Right lobe of liver (tissue), 6 donors: ENCODE measurements at regions of chr3 and their contacts with region 1.

Region 1: DNA sequence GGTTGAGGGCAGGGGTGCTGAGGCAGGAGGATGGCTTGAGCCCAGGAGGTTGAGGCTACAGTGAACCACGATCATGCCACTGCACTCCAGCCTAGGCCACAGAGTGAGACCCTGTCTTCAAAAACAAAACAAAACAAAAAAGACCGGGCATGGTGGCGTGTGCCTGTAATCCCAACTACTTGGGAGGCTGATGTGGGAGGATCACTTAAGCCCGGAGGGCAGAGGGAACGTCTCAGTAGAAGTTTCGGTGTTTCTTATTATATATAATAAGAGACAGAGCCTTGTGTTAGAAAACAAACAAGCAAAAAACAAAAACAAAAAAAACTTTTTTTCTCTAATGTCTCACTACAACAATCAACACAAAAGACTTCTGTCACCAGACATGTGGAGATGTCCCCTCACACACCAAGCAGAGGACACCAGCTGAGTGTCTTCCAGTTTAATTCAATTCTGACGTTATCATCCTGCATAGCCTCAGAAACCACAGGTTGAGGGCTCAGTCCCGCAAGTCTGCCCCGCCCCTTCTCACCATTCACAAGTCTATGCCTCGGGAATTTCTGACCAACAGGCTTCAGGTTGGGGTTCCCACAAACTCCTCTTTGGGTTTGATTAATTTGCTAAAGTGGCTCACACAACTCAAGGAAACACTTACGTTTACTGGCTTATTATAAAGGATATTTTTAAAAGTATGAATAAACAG is 24.0 kb upstream of the EIF4A2 start:
- DNase-seq: no peak
- ATAC-seq: no peak
- H3K4me3 ChIP-seq: no peak overlapping the region
- H3K27ac ChIP-seq: no peak overlapping the region
- H3K4me1 ChIP-seq: no peaks in the 10 kb centered on the region
- H3K27me3 ChIP-seq: no peaks in the 10 kb centered on the region
- CTCF ChIP-seq: no peak
- POLR2A ChIP-seq: no peak

Region 2: DNA sequence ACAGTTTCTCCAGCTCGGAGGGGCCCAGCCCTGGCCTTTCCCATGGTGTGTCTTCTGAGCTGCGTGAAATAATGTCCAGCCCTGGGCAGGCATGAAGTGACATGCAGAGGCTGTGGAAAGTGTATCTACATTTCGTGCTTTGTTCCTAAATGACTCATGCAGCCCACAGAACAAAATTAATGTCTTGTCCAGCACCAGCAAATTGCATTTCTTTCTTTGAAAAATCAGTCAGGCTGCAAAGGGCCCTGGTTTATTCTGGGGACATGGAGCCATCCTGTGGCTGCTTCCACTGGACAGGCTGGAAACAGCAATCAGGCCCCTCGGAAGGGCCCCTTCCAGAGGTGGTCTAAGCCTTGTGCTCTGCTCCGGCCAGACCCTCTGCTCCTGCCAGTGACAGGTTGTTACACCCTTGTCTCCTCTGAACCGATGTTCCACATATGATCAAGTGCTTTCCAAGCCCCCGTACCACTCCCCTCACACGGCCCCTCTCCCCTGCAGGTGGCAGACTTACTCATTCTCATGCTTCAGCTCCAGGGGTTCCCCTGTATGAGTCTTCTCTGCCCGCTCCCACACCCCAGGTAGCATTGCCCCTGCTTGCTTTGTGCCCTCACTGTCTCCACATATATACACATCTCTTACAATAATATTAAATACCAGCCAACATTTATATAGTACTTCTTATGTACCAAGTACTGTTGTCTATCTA is 248.9 kb before region 1 on chr3:
- intact Hi-C with region 1: no loop called
- DNase-seq: no peak
- ATAC-seq: no peak
- H3K4me3 ChIP-seq: no peak overlapping the region
- H3K27ac ChIP-seq: no peak overlapping the region
- H3K4me1 ChIP-seq: no peaks in the 10 kb centered on the region
- H3K27me3 ChIP-seq: no peaks in the 10 kb centered on the region
- CTCF ChIP-seq: no peak
- POLR2A ChIP-seq: no peak

Region 3: GRCh38 chr3:186617038-186617946 is 142.1 kb before region 1 on chr3:
- intact Hi-C with region 1: loop called in 1 of 2 experiments (anchors 5 kb)
- DNase-seq: peak; percentile 90 to 91 (median 90)
- ATAC-seq: peak; percentile 61 to 83 (median 65)
- H3K4me3 ChIP-seq: no peak overlapping the region
- H3K27ac ChIP-seq: peak overlapping the region in 1 of 3 donors; percentile 24
- H3K4me1 ChIP-seq: peaks cover 0 to 39% (median 16%) of the 10 kb centered on the region in 4 donors
- H3K27me3 ChIP-seq: no peaks in the 10 kb centered on the region
- CTCF ChIP-seq: peak; percentile 88 to 92 (median 88)
- POLR2A ChIP-seq: no peak